ENCODE measurements at regions of chr4 and their contacts with region 1.

Region 1: GRCh38 chr4:146175541-146176453 is at the start of gene LSM6:
- DNase-seq: peak; percentile 76 to 82
- ATAC-seq: peak; percentile 94 to 96
- H3K4me3 ChIP-seq: peak within 1 kb of the TSS; percentile 83 to 90 (median 88)
- H3K27ac ChIP-seq: peak within 1 kb of the TSS; percentile 81 to 93 (median 88)
- H3K4me1 ChIP-seq: peaks cover 35 to 44% of the 10 kb centered on the region in 2 donors
- H3K27me3 ChIP-seq: no peaks in the 10 kb centered on the region
- CTCF ChIP-seq: peak in 2 of 5 experiments; percentile 34 to 40
- POLR2A ChIP-seq: peak; percentile 61 to 69
- total RNA-seq, gene LSM6: 12.7 to 31.0 (median 15.5) TPM

Region 2: GRCh38 chr4:145840162-145840768 is 335.5 kb before region 1 on chr4:
- in situ Hi-C with region 1: no loop called
- intact Hi-C with region 1: loop called (anchors 10 kb)
- DNase-seq: no peak
- ATAC-seq: peak; percentile 46 to 89
- H3K4me3 ChIP-seq: no peak overlapping the region
- H3K27ac ChIP-seq: no peak overlapping the region
- H3K4me1 ChIP-seq: peaks cover 8 to 10% of the 10 kb centered on the region in 2 donors
- H3K27me3 ChIP-seq: no peaks in the 10 kb centered on the region
- CTCF ChIP-seq: peak; percentile 28 to 63 (median 45)
- POLR2A ChIP-seq: no peak

Region 3: GRCh38 chr4:145945431-145946155 is 230.2 kb before region 1 on chr4:
- in situ Hi-C with region 1: no loop called
- intact Hi-C with region 1: loop called (anchors 5 kb)
- DNase-seq: peak; percentile 74 to 79
- ATAC-seq: peak; percentile 99 to 100
- H3K4me3 ChIP-seq: peak overlapping the region in 1 of 4 donors; percentile 8
- H3K27ac ChIP-seq: peak overlapping the region; percentile 69 to 84 (median 81)
- H3K4me1 ChIP-seq: peaks cover 18 to 21% of the 10 kb centered on the region in 2 donors
- H3K27me3 ChIP-seq: no peaks in the 10 kb centered on the region
- CTCF ChIP-seq: no peak
- POLR2A ChIP-seq: no peak

Region 4: DNA sequence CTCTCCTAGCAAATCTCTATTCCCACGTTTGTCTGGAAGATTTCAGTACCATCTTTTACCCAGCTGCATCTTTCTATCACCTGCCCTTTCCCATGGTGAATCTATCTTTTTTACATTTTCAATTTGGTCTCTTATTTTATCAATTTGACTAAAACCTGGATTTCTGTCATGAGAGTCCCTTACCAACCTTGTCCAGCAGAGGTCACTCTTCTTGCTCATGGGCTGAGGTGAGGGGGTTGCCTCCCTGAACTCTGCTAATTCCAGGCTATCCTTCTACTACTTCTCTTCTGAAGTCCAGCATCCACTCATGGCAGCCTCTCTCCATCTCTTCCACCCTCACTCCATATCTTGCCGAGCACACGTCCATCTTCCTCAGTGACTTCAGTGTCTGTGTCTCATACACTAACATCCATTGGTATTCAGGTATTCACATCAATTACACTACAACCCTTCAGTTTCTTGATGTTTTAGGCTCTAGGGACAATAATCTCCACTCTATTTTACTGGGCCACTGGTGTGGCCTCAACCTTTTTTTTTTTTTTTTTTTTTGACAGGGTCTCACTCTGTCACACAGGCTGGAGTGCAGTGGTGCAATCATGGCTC is 219.4 kb before region 1 on chr4:
- in situ Hi-C with region 1: no loop called
- intact Hi-C with region 1: no loop called
- DNase-seq: no peak
- ATAC-seq: no peak
- H3K4me3 ChIP-seq: no peak overlapping the region
- H3K27ac ChIP-seq: no peak overlapping the region
- H3K4me1 ChIP-seq: no peaks in the 10 kb centered on the region
- H3K27me3 ChIP-seq: no peaks in the 10 kb centered on the region
- CTCF ChIP-seq: peak; percentile 37 to 64 (median 49)
- POLR2A ChIP-seq: no peak

Region 5: GRCh38 chr4:146522098-146522868 is 346.5 kb after region 1 on chr4:
- in situ Hi-C with region 1: no loop called
- intact Hi-C with region 1: loop called (anchors 5 kb)
- DNase-seq: peak; percentile 78 to 84
- ATAC-seq: peak; percentile 92 to 93
- H3K4me3 ChIP-seq: peak overlapping the region; percentile 89 to 97 (median 92)
- H3K27ac ChIP-seq: peak overlapping the region; percentile 85 to 90 (median 87)
- H3K4me1 ChIP-seq: peaks cover 21 to 25% of the 10 kb centered on the region in 2 donors
- H3K27me3 ChIP-seq: no peaks in the 10 kb centered on the region
- CTCF ChIP-seq: no peak
- POLR2A ChIP-seq: peak; percentile 66 to 72

Measured in gastrocnemius medialis (tissue), 4 donors.